ENCODE measurements at regions of chr1 and their contacts with region 1.

Region 1: DNA sequence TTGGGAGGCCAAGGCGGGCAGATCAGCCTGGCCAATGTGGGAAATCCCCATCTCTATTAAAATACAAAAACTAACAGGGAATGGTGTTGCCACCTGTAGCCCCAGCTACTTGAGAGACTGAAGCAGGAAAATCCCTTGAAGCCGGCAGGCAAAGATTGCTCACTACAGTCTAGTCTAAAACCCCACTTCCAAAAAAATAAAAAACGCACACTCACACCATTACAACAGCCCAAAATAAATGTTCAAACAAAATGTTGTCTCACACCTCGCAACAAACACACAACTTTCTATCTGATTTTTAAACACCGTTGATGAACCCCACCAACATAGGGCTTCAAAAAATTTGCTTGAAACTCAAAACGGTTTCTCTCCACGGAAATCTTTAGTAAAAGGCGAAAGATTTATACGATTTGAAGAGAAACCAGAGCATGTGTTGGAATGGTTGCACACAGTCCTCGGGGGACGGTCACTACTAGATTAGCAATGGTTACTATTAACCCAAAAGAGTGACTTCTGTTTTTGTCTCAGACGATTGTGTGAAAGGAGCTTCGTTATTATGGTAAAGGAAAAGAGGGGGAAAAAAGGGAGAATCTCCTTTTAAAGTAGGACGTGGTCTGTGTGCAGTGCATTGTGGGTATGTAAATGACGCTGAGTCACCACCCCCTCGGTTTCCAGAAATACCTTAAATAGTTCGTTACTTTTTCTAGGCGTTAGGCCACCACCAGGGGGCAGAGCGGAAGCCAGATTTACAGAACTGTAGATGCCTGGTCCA is at the start of gene RNU5D-1:
- DNase-seq: peak; percentile 77 to 92 (median 89)
- ATAC-seq: peak; percentile 85
- H3K4me3 ChIP-seq: peak within 1 kb of the TSS; percentile 18
- H3K4me3 Mint-ChIP-seq: peak within 1 kb of the TSS; percentile 54 to 93 (median 84)
- H3K27ac ChIP-seq: peak within 1 kb of the TSS; percentile 86
- H3K27ac Mint-ChIP-seq: peak within 1 kb of the TSS; percentile 97 to 100 (median 98)
- H3K4me1 ChIP-seq: peaks cover 10 to 13% of the 10 kb centered on the region in 2 donors
- H3K4me1 Mint-ChIP-seq: peaks cover 14 to 58% (median 43%) of the 10 kb centered on the region in 7 donors
- H3K27me3 ChIP-seq: no peaks in the 10 kb centered on the region
- H3K27me3 Mint-ChIP-seq: no peaks in the 10 kb centered on the region
- total RNA-seq, gene RNU5D-1: not detected

Region 2: GRCh38 chr1:44423591-44424537 is 307.1 kb before region 1 on chr1:
- CTCF ChIA-PET with region 1: no interaction called
- POLR2A ChIA-PET with region 1: no interaction called
- intact Hi-C with region 1: no loop called
- DNase-seq: no peak
- ATAC-seq: peak; percentile 62
- H3K4me3 ChIP-seq: no peak overlapping the region
- H3K4me3 Mint-ChIP-seq: peak overlapping the region in 7 of 10 donors; percentile 2 to 79 (median 60)
- H3K27ac ChIP-seq: no peak overlapping the region
- H3K27ac Mint-ChIP-seq: no peak overlapping the region
- H3K4me1 ChIP-seq: no peaks in the 10 kb centered on the region
- H3K4me1 Mint-ChIP-seq: peaks cover 5 to 8% (median 7%) of the 10 kb centered on the region in 7 donors
- H3K27me3 ChIP-seq: peaks cover 0 to 16% of the 10 kb centered on the region in 2 donors
- H3K27me3 Mint-ChIP-seq: peaks cover 53 to 90% (median 85%) of the 10 kb centered on the region in 5 donors

Region 3: GRCh38 chr1:44568135-44568900 is 162.6 kb before region 1 on chr1:
- CTCF ChIA-PET with region 1: no interaction called
- POLR2A ChIA-PET with region 1: no interaction called
- intact Hi-C with region 1: no loop called
- DNase-seq: no peak
- ATAC-seq: no peak
- H3K4me3 ChIP-seq: no peak overlapping the region
- H3K4me3 Mint-ChIP-seq: no peak overlapping the region
- H3K27ac ChIP-seq: no peak overlapping the region
- H3K27ac Mint-ChIP-seq: no peak overlapping the region
- H3K4me1 ChIP-seq: no peaks in the 10 kb centered on the region
- H3K4me1 Mint-ChIP-seq: no peaks in the 10 kb centered on the region
- H3K27me3 ChIP-seq: no peaks in the 10 kb centered on the region
- H3K27me3 Mint-ChIP-seq: peaks cover 0 to 22% (median 0%) of the 10 kb centered on the region in 5 donors

Region 4: DNA sequence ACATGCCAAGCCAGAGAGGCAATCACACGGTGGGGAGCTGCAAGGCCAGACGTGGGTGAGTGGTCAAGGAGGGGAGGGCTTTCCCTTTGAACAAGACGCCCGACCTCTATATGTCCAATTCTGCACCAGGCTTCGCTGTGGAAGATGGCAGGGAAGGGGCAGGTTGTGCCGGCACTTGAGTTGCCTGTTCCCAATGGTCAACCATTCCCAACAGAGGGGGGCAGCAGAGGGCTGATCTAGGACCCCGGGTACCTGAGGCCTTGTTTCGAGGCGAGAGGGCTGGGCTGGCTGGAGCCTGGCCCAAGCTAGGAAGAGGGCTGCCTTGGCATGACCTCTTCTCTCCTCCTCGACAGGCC is 121.5 kb before region 1 on chr1:
- CTCF ChIA-PET with region 1: no interaction called
- POLR2A ChIA-PET with region 1: no interaction called
- intact Hi-C with region 1: no loop called
- DNase-seq: peak in 3 of 9 donors; percentile 15 to 26 (median 21)
- ATAC-seq: no peak
- H3K4me3 ChIP-seq: no peak overlapping the region
- H3K4me3 Mint-ChIP-seq: no peak overlapping the region
- H3K27ac ChIP-seq: no peak overlapping the region
- H3K27ac Mint-ChIP-seq: no peak overlapping the region
- H3K4me1 ChIP-seq: no peaks in the 10 kb centered on the region
- H3K4me1 Mint-ChIP-seq: no peaks in the 10 kb centered on the region
- H3K27me3 ChIP-seq: no peaks in the 10 kb centered on the region
- H3K27me3 Mint-ChIP-seq: peaks cover 0 to 7% (median 4%) of the 10 kb centered on the region in 5 donors

Region 5: DNA sequence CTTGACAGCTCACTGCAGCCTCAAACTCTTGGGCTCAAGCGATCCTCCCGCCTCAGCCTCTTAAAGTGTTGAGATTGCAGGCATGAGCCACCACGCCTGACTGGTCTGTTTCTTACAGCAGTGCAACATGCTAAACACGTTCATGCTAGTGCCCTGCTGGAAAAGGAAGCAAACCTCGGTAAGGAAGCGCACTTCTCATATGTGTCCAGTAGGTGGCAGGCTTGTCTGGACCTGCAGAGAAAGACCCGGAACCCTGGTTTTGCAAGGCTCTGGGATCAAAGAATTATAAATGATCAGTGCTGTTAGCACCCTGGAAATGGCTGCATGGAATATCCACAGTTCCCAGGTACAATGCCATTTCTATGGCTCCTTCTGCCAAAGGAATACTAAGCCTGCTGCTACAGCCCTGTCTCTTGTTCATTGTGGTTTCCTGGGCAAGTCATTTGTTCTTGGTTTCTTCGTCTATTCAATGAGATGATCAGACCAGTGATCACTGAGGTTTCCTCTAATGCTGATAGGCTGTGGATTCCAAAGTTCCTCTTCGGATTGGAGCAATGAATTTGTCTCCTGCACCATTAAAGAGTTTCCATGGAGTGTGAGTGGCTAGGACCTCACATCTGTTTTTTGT is 15.9 kb before region 1 on chr1:
- CTCF ChIA-PET with region 1: interaction called, 55 read pairs
- POLR2A ChIA-PET with region 1: interaction called, 239 read pairs
- intact Hi-C with region 1: loop called (anchors 1 to 2 kb)
- DNase-seq: peak; percentile 46 to 77 (median 69)
- ATAC-seq: peak; percentile 98
- H3K4me3 ChIP-seq: peak overlapping the region; percentile 28
- H3K4me3 Mint-ChIP-seq: peak overlapping the region; percentile 24 to 72 (median 66)
- H3K27ac ChIP-seq: peak overlapping the region; percentile 39
- H3K27ac Mint-ChIP-seq: peak overlapping the region; percentile 40 to 85 (median 68)
- H3K4me1 ChIP-seq: peaks cover 11 to 37% of the 10 kb centered on the region in 2 donors
- H3K4me1 Mint-ChIP-seq: peaks cover 39 to 52% (median 47%) of the 10 kb centered on the region in 7 donors
- H3K27me3 ChIP-seq: no peaks in the 10 kb centered on the region
- H3K27me3 Mint-ChIP-seq: peaks cover 0 to 9% (median 0%) of the 10 kb centered on the region in 5 donors

Region 6: GRCh38 chr1:44799770-44800584 is 69.0 kb after region 1 on chr1 and contains the start of gene PLK3:
- CTCF ChIA-PET with region 1: interaction called, 7 read pairs
- POLR2A ChIA-PET with region 1: interaction called, 15 read pairs
- intact Hi-C with region 1: loop called (anchors 2 kb)
- DNase-seq: peak; percentile 93 to 99 (median 98)
- ATAC-seq: peak; percentile 92
- H3K4me3 ChIP-seq: peak within 1 kb of the TSS; percentile 66
- H3K4me3 Mint-ChIP-seq: peak within 1 kb of the TSS; percentile 85 to 98 (median 93)
- H3K27ac ChIP-seq: peak within 1 kb of the TSS; percentile 94
- H3K27ac Mint-ChIP-seq: peak within 1 kb of the TSS; percentile 84 to 99 (median 98)
- H3K4me1 ChIP-seq: peaks cover 17 to 24% of the 10 kb centered on the region in 2 donors
- H3K4me1 Mint-ChIP-seq: peaks cover 19 to 43% (median 33%) of the 10 kb centered on the region in 7 donors
- H3K27me3 ChIP-seq: no peaks in the 10 kb centered on the region
- H3K27me3 Mint-ChIP-seq: no peaks in the 10 kb centered on the region
- total RNA-seq, gene PLK3: 92.8 to 456 (median 142) TPM

Region 7: DNA sequence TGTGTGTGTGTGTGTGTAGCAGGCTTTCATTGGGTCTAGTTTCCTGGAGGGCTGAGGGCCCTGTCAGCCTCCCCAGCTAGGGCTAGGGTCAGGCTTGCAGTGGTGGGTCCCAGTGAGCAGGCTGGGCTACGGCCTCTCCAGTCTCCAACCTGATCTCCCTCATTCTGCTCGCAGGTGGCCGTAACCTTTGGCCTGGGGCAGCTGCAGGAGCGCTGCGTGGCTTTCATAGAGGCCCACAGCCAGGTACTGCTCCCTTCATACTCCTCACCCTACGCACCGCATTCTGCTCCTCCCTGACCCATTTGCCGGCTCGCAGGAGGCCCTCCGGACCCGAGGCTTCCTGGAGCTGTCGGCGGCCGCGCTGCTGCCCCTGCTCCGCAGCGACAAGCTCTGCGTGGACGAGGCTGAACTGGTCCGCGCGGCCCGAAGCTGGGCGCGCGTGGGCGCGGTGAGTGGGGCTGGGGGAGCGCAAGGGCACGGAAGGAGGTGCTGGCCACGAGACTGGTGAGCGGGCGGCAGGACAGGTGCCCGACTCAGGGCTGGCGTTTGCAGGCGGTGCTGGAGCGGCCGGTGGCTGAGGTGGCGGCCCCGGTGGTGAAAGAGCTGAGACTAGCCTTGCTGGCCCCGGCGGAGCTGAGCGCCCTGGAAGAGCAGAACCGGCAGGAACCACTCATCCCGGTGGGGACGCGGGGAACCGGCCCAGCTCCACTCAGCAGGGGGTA is 82.1 kb after region 1 on chr1:
- CTCF ChIA-PET with region 1: interaction called, 3 read pairs
- POLR2A ChIA-PET with region 1: interaction called, 50 read pairs
- intact Hi-C with region 1: loop called in 1 of 2 experiments (anchors 2 kb)
- DNase-seq: no peak
- ATAC-seq: no peak
- H3K4me3 ChIP-seq: peak overlapping the region; percentile 66
- H3K4me3 Mint-ChIP-seq: peak overlapping the region in 9 of 10 donors; percentile 45 to 94 (median 89)
- H3K27ac ChIP-seq: peak overlapping the region; percentile 81
- H3K27ac Mint-ChIP-seq: peak overlapping the region in 8 of 9 donors; percentile 95 to 100 (median 99)
- H3K4me1 ChIP-seq: peaks cover 45 to 56% of the 10 kb centered on the region in 2 donors
- H3K4me1 Mint-ChIP-seq: peaks cover 52 to 77% (median 63%) of the 10 kb centered on the region in 7 donors
- H3K27me3 ChIP-seq: no peaks in the 10 kb centered on the region
- H3K27me3 Mint-ChIP-seq: peaks cover 0 to 3% (median 0%) of the 10 kb centered on the region in 5 donors

Region 8: DNA sequence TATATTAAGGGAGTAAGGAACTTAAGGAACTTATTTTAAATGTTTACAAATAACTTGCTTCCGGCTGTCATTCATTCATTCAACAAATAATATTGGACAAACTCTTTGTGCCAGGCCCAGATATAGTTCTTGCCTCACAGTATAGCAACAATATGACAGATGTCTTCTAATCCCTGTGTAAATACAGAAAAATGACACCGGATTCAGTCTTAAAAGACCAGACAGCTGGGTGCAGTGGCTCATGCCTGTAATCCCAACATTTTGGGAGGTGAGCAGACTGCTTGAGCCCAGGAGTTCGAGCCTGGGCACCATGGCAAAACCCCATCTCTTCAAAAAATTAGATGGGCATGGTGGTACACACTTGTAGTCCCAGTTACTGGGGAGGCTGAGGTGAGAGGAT is 231.8 kb after region 1 on chr1:
- CTCF ChIA-PET with region 1: no interaction called
- POLR2A ChIA-PET with region 1: no interaction called
- intact Hi-C with region 1: no loop called
- DNase-seq: no peak
- ATAC-seq: no peak
- H3K4me3 ChIP-seq: no peak overlapping the region
- H3K4me3 Mint-ChIP-seq: no peak overlapping the region
- H3K27ac ChIP-seq: no peak overlapping the region
- H3K27ac Mint-ChIP-seq: no peak overlapping the region
- H3K4me1 ChIP-seq: no peaks in the 10 kb centered on the region
- H3K4me1 Mint-ChIP-seq: peaks cover 0 to 3% (median 0%) of the 10 kb centered on the region in 7 donors
- H3K27me3 ChIP-seq: no peaks in the 10 kb centered on the region
- H3K27me3 Mint-ChIP-seq: no peaks in the 10 kb centered on the region

Region 9: GRCh38 chr1:45205910-45206721 is 475.2 kb after region 1 on chr1 and contains the start of gene ZSWIM5:
- CTCF ChIA-PET with region 1: no interaction called
- POLR2A ChIA-PET with region 1: no interaction called
- intact Hi-C with region 1: loop called in 1 of 2 experiments (anchors 5 kb)
- DNase-seq: peak; percentile 53 to 74 (median 66)
- ATAC-seq: peak; percentile 88
- H3K4me3 ChIP-seq: peak within 1 kb of the TSS; percentile 77
- H3K4me3 Mint-ChIP-seq: peak within 1 kb of the TSS; percentile 84 to 100 (median 94)
- H3K27ac ChIP-seq: peak within 1 kb of the TSS; percentile 50
- H3K27ac Mint-ChIP-seq: peak within 1 kb of the TSS; percentile 66 to 94 (median 83)
- H3K4me1 ChIP-seq: peaks cover 11 to 18% of the 10 kb centered on the region in 2 donors
- H3K4me1 Mint-ChIP-seq: peaks cover 13 to 41% (median 27%) of the 10 kb centered on the region in 7 donors
- H3K27me3 ChIP-seq: no peaks in the 10 kb centered on the region
- H3K27me3 Mint-ChIP-seq: peaks cover 0 to 56% (median 0%) of the 10 kb centered on the region in 5 donors
- total RNA-seq, gene ZSWIM5: 0.17 to 3.6 (median 2.3) TPM